Vagina (tissue), 2 donors: ENCODE measurements at regions of chr5 and their contacts with region 1.

Region 1: DNA sequence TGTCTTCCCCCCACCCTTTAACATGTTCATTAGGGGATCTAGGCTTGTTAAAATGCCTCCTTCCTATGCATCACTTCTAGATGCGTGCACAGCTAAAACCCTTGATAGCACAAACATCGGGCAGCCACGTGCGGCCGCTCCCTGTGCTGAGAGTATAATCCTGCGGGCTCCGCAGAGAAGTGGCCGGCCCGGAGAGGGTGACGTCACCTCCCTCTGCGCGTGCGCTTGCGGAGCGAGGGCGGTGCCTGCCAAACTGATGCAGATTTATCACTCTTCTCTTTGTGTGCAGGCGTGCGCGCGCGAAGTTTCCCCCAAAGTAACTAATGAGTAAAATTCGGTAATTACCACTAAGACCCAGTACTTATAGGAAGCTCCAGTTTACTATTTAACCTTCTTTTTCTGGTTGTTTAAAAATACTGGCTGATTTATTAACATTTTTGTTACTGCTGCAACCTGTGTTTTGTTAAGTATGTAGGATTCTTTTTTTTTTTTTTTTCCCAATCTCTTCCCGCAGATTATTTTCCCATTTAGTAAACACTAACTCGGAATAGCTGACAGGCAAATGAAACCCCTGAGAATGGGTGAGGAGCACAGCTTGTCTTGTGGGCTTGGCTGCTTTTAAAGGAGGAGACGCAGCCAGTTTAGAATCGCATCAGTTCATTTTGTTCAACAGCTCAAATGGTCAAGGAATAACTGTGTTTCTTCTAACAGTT is 121.6 kb downstream of the TRIO start:
- DNase-seq: no peak
- H3K4me3 ChIP-seq: peak overlapping the region; percentile 2 to 32
- H3K27ac ChIP-seq: peak overlapping the region; percentile 21
- H3K4me1 ChIP-seq: peaks cover 38% of the 10 kb centered on the region
- H3K27me3 ChIP-seq: no peaks in the 10 kb centered on the region
- CTCF ChIP-seq: no peak
- POLR2A ChIP-seq: no peak

Region 2: GRCh38 chr5:14108170-14108996 is 156.4 kb before region 1 on chr5:
- intact Hi-C with region 1: loop called (anchors 5 kb)
- DNase-seq: no peak
- H3K4me3 ChIP-seq: no peak overlapping the region
- H3K27ac ChIP-seq: peak overlapping the region; percentile 49
- H3K4me1 ChIP-seq: peaks cover 17% of the 10 kb centered on the region
- H3K27me3 ChIP-seq: no peaks in the 10 kb centered on the region
- CTCF ChIP-seq: peak in 2 of 3 experiments; percentile 14 to 39
- POLR2A ChIP-seq: no peak